ENCODE measurements at regions of chr2 and their contacts with region 1.

Region 1: GRCh38 chr2:38947240-38948239 is 57.9 kb downstream of the ARHGEF33 start:
- DNase-seq: peak; percentile 84
- ATAC-seq: peak; percentile 84
- H3K4me3 Mint-ChIP-seq: no peak overlapping the region
- H3K27ac Mint-ChIP-seq: no peak overlapping the region
- H3K4me1 Mint-ChIP-seq: no peaks in the 10 kb centered on the region
- H3K27me3 Mint-ChIP-seq: no peaks in the 10 kb centered on the region

Region 2: DNA sequence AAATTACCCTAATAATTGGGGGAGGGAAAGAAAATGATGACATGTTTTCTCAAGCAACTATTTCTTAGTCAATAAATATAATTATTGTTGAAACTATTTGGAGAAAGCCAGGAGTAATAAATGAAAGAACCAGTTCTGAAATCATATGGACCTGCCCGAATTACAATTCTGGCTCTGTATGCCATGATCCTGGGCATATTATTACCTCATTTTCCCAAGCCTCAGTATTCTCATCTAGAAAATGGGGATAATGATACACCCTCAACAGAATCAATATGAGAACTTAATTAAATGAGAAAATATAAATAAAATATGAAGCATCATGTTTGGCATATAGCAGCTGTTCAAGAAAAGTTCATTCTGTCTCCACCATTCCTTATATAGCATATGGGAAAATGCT is 34.9 kb before region 1 on chr2:
- CTCF ChIA-PET with region 1: interaction called, 13 read pairs
- POLR2A ChIA-PET with region 1: no interaction called
- intact Hi-C with region 1: no loop called
- DNase-seq: no peak
- ATAC-seq: no peak
- H3K4me3 Mint-ChIP-seq: no peak overlapping the region
- H3K27ac Mint-ChIP-seq: no peak overlapping the region
- H3K4me1 Mint-ChIP-seq: peaks cover 13% of the 10 kb centered on the region
- H3K27me3 Mint-ChIP-seq: no peaks in the 10 kb centered on the region

Region 3: DNA sequence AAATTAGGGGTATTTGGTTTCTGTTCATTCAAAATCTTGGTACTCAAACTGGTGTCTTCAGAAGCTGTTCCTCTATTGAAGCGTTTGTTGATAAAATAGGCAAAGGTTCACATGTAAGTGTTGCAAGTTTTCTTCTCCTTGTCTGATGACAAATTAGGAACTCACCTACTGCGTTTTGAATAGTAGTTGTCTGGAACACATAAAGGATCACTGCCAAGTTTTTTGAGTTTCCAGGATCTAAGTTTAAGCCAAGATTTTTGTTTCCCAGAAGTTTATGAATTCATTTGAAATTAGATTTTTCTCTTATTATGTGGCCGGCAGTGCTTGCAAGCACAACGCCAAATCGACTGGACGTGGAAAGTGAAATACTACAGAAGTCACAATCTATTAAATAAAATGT is 27.5 kb after region 1 on chr2:
- CTCF ChIA-PET with region 1: interaction called, 10 read pairs
- POLR2A ChIA-PET with region 1: no interaction called
- intact Hi-C with region 1: no loop called
- DNase-seq: no peak
- ATAC-seq: no peak
- H3K4me3 Mint-ChIP-seq: no peak overlapping the region
- H3K27ac Mint-ChIP-seq: no peak overlapping the region
- H3K4me1 Mint-ChIP-seq: no peaks in the 10 kb centered on the region
- H3K27me3 Mint-ChIP-seq: no peaks in the 10 kb centered on the region

Region 4: DNA sequence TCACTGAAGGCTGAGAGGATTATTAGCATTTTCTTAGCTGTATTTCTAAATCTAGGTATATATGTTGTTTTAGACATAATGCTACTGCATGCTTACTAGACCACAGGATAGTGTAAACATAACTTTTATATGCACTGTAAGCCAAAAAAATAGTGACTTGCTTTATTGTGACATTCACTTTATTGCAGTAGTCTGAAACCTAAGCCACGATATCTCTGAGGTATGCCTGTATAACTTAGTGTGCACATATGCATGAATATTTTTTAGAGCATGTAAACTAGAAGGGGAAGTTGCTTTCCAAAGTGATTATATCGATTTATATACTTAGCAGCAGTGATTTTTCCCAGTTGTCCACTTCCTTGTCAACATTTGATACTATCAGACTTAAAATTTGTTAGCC is 91.5 kb after region 1 on chr2:
- CTCF ChIA-PET with region 1: interaction called, 12 read pairs
- POLR2A ChIA-PET with region 1: no interaction called
- intact Hi-C with region 1: loop called in 1 of 2 experiments (anchors 5 kb)
- DNase-seq: no peak
- ATAC-seq: no peak
- H3K4me3 Mint-ChIP-seq: no peak overlapping the region
- H3K27ac Mint-ChIP-seq: no peak overlapping the region
- H3K4me1 Mint-ChIP-seq: no peaks in the 10 kb centered on the region
- H3K27me3 Mint-ChIP-seq: no peaks in the 10 kb centered on the region

Region 5: DNA sequence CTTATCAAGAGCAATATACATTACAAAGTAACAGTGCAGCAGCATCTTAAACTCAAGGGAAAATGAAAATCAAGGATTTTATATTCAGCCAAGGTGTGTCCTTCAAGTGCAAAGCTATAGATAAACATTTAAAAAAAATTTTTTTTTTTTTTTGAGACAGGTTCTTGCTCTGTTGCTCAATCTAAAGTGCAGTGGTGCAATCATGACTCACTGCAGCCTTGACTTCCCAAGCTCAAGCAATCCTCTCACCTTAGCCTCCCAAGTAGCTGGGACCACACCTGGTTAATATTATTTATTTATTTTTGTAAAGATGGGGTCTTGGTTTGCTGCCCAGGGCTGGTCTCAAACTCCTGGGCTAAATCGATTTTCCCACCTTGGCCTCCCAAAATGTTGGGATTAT is 287.2 kb after region 1 on chr2:
- CTCF ChIA-PET with region 1: interaction called, 126 read pairs
- POLR2A ChIA-PET with region 1: no interaction called
- intact Hi-C with region 1: loop called (anchors 1 kb)
- DNase-seq: no peak
- ATAC-seq: no peak
- H3K4me3 Mint-ChIP-seq: no peak overlapping the region
- H3K27ac Mint-ChIP-seq: no peak overlapping the region
- H3K4me1 Mint-ChIP-seq: no peaks in the 10 kb centered on the region
- H3K27me3 Mint-ChIP-seq: no peaks in the 10 kb centered on the region